ENCODE measurements at regions of chr10 and their contacts with region 1.

Region 1: DNA sequence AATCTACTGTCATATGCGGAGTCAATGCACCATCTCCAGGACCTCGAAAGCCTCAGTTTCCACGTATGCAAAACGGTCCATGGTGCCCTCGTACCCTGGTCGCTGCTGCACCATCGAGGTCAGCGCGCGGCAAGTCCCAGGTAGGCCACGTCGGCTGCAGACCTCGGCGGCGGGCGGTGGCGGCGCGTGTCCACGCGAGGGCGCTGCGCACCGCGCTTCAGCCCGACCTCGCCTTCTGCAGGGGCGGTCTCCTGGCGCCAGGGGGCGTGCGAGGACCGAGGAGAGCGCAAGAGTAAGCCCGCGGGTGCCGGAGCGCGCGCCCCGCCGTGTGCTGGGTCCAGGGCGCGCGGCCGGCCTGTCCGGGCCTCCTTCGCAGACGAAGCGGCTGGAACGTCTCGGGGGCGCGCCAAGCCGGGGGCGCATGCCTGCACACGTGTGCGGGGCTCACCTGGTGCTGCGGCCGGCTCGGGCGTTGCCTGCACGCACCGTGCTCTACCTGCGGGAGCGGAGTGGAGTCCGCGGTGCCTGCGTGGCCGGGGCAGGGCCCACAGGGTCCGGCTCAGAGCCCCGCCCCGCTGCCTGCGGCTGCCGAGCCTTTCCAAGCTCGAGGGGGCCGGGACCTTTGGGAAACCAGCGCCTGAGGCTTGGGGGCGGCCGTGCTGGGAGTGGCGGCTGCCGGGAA is 54.0 kb downstream of the GLRX3 start:
- DNase-seq: peak; percentile 74
- H3K4me3 ChIP-seq: no peak overlapping the region
- H3K27ac ChIP-seq: no peak overlapping the region
- H3K4me1 ChIP-seq: no peaks in the 10 kb centered on the region
- CTCF ChIP-seq: peak; percentile 91

Region 2: GRCh38 chr10:130254662-130255061 is 64.5 kb after region 1 on chr10:
- CTCF ChIA-PET with region 1: no interaction called
- POLR2A ChIA-PET with region 1: no interaction called
- intact Hi-C with region 1: no loop called
- DNase-seq: no peak
- H3K4me3 ChIP-seq: no peak overlapping the region
- H3K27ac ChIP-seq: no peak overlapping the region
- H3K4me1 ChIP-seq: no peaks in the 10 kb centered on the region
- CTCF ChIP-seq: 0 out of 2 replicates have a peak, but pooled peaks have one; percentile 26

Region 3: DNA sequence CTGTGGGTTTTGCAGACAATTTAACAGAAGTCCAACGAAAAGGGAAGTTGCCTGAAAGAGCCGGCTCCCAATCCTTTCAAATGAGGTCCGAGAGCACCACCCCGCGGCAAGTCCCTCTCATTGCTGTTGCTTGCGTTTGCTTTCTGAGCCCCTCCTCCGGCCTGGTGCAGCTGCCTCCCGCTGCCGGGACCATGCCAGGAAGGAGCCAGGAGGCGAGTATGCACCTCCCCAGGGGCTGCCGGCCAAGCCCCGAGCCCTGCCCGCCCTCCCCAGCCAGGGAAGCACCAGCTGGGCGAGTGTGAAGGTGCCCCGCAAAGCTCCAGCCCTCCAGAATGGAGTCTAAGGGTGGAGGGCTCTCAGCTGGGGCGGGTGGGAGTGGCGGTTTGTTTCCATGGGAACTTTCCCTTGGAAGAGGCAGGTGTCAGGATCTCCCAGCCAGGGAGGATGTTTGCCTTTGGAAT is 1684.8 kb after region 1 on chr10:
- CTCF ChIA-PET with region 1: no interaction called
- POLR2A ChIA-PET with region 1: no interaction called
- intact Hi-C with region 1: loop called (anchors 5 kb)
- DNase-seq: peak; percentile 80
- H3K4me3 ChIP-seq: no peak overlapping the region
- H3K27ac ChIP-seq: no peak overlapping the region
- H3K4me1 ChIP-seq: no peaks in the 10 kb centered on the region
- CTCF ChIP-seq: peak; percentile 83

Measured in OCI-LY7 (cell line).